ENCODE measurements at regions of chr5 and their contacts with region 1.

Region 1: DNA sequence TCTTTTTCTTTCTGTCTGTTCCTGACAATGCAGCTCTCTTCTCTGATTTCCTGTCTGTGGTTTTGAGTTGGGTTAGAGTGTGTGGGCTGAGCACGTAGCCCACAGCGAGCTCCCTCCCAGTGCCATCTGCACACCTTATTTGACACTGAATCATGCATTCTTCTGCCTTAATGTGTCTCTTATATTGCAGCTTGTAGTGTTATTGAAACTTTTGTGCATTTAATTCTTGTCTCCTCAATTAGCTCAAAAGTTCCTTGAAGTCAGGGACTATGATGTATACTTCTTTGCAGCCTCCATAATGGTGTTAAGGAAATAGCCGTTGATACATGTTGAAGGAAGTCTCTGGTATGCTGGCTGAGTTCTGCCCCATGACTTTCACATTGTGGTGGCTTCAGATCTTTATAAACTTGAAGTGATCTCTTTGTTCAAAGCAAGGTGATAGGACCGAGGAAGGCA is 576.2 kb upstream of the CLINT1 start:
- DNase-seq: peak; percentile 69
- ATAC-seq: peak; percentile 80
- H3K4me3 Mint-ChIP-seq: peak overlapping the region; percentile 45
- H3K27ac Mint-ChIP-seq: peak overlapping the region; percentile 83
- H3K4me1 Mint-ChIP-seq: peaks cover 56% of the 10 kb centered on the region
- H3K27me3 Mint-ChIP-seq: no peaks in the 10 kb centered on the region

Region 2: GRCh38 chr5:157603333-157604190 is 831.6 kb before region 1 on chr5:
- CTCF ChIA-PET with region 1: no interaction called
- POLR2A ChIA-PET with region 1: no interaction called
- intact Hi-C with region 1: no loop called
- DNase-seq: peak; percentile 78
- ATAC-seq: peak; percentile 44
- H3K4me3 Mint-ChIP-seq: peak overlapping the region; percentile 49
- H3K27ac Mint-ChIP-seq: peak overlapping the region; percentile 79
- H3K4me1 Mint-ChIP-seq: peaks cover 88% of the 10 kb centered on the region
- H3K27me3 Mint-ChIP-seq: no peaks in the 10 kb centered on the region

Region 3: GRCh38 chr5:158456756-158457155 is 21.6 kb after region 1 on chr5:
- CTCF ChIA-PET with region 1: interaction called, 4 read pairs
- POLR2A ChIA-PET with region 1: interaction called, 10 read pairs
- intact Hi-C with region 1: no loop called
- DNase-seq: peak; percentile 10
- ATAC-seq: peak; percentile 19
- H3K4me3 Mint-ChIP-seq: no peak overlapping the region
- H3K27ac Mint-ChIP-seq: no peak overlapping the region
- H3K4me1 Mint-ChIP-seq: no peaks in the 10 kb centered on the region
- H3K27me3 Mint-ChIP-seq: no peaks in the 10 kb centered on the region